ENCODE measurements at regions of chr6 and their contacts with region 1.

Region 1: DNA sequence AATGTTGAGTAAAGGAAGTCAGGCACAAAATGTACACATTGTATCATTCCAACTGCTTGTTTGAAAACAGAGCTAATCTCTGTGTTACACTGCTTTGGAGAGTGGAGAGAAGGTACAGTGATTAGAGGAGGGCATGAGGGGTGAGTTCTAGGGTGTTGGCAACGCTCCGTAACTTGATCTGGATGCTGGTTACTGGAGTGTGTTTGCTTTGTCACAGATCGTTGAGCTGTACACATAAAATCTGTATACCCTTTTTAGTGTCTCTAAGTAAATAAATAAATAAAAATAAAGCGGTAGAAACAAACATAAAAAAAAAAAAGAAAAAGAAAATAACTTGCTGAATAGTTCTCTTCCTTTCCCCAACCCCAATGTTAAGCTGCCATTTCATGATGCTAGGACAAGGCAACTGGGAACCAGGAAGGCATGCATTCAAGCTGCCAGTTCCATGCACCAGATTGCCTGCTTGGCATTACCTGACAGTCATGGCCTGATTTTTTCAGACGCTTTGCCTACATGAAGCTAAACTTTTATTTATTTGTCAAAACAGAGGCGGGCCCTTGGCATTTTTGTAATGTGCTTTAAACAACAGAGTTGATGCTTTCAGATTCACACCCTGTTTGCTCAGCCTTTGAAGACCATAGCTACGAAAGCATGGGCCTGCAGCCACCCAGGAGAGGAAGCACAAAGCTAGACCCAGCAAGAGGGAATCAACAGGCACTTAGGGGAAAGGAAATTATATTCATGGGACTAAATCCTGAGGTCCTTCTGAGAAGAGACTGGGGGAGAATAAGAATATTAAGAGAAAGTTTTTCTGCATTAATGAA is 21.2 kb downstream of the TNFRSF21 start:
- DNase-seq: peak in 1 of 2 experiments; percentile 32
- H3K4me3 ChIP-seq: no peak overlapping the region
- H3K27ac ChIP-seq: peak overlapping the region; percentile 62
- H3K4me1 ChIP-seq: peaks cover 51% of the 10 kb centered on the region
- H3K27me3 ChIP-seq: no peaks in the 10 kb centered on the region
- CTCF ChIP-seq: no peak

Region 2: DNA sequence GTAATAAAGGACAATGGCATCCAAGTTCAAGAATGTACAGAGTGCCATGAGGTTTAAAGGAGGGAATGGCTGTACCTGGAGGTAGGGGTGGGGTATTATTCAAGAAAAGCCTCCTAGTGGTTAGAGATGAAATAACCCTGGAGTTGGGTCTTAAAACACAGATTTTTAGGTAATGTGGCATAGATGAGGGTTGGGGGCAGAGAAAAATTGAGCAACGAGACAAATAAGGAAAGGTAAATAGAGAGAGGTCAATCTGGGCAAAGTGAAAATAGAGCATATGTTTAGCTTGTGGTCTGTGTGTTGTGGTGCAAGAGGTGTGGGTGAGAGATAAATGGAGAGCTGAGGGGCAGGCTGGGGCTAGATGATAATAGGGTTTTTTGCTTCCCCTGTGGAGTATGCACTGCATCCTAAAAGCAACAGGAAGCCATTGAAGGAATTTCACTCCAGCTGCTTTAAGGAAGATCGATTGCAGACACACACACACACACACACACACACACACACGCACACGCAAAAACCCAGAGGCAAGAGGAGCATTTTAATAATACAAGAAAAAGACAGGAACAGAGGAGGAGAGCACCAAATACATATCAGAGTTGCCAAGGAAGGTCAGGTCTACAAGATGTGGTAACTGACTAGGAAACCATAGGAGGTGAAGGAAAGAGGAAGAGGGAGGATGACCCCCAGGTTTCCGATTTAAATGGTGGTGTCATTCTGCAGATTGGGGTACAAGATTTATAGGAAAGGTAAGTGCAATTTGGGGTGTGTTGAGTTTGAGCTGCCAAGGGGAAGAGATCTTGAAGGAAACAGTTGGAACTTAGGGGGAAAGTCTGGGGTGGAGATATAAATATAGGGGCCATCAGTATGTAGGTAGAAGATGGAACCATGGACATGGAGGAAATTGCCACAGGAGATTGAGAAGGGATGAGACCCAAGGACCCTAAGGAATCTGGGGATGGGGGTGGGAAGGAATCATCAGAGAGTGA is 215.1 kb before region 1 on chr6:
- CTCF ChIA-PET with region 1: no interaction called
- POLR2A ChIA-PET with region 1: no interaction called
- intact Hi-C with region 1: no loop called
- DNase-seq: peak in 1 of 2 experiments; percentile 35
- H3K4me3 ChIP-seq: no peak overlapping the region
- H3K27ac ChIP-seq: no peak overlapping the region
- H3K4me1 ChIP-seq: no peaks in the 10 kb centered on the region; the same call in 1 of the 2 replicates
- H3K27me3 ChIP-seq: no peaks in the 10 kb centered on the region
- CTCF ChIP-seq: peak; percentile 58

Region 3: DNA sequence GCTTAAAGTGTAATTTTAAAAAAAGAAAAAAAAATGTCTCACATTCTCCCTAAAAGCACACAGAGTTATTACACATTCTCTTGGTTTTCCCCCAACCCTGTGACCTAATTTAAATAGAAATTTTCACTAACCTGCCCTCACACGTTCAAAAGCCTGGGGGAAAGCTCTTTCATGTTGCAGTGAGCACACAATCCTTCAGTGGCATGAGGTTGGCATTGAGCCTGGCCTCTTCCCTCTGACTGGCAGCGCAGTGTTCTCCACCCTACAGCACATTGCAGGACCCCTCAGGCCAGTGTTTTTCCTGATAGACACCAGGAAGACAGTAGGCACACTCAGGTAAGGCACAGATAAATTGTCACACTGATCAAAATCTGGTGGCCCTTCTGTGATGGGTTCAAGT is 12.8 kb before region 1 on chr6:
- CTCF ChIA-PET with region 1: no interaction called
- POLR2A ChIA-PET with region 1: interaction called, 37 read pairs
- intact Hi-C with region 1: no loop called
- DNase-seq: peak in 1 of 2 experiments; percentile 16
- H3K4me3 ChIP-seq: no peak overlapping the region
- H3K27ac ChIP-seq: no peak overlapping the region
- H3K4me1 ChIP-seq: peaks cover 43% of the 10 kb centered on the region
- H3K27me3 ChIP-seq: no peaks in the 10 kb centered on the region
- CTCF ChIP-seq: no peak

Measured in PC-9 (cell line).